ENCODE measurements at regions of chr19 and their contacts with region 1.

Region 1: DNA sequence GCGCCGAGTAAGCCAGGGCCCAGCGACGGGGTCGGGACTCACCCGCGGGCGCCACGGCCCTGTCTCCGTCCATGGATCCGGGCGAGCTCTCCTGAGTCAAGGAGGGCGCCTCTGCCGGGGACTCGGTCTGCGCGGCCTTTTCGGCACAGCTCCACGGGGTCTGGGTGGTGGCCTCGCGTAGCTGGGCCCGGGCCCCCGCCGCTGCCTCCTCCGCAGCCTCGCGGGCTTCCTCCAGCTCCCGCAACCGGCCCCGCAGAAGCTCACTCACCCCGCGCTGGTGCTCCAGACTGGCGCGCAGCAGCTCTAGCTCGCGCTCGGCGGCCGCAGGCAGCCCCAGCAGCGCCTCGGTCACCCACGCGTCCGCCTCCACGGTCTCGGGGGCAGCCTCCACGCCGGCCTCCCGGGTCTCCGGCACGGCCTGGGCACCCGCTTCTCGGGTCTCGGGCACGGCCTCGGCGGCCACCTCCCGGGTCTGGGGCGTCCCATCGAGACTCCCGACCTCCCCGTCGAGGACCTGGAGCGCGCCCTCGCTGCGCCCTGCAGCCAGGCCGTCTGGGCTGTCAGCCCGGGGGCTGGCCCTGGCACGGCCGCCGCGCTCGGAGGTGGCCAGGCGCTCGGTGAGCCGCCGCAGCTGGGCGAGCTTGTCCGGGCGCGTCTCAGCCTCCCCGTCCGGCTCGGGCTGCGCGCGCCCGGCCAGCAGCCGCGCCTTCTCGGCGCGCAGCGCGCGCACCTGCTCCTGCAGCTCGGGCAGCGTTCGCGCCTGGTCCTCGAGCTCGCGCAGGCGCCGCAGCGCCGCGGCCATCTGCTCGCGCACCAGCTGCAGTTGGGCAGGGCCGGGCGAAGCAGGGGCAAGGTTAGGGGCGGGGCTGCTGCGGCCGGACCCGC is 8.4 kb downstream of the KANK3 start:
- DNase-seq: peak; percentile 86
- H3K4me3 ChIP-seq: peak overlapping the region; percentile 37 to 39; a peak in 3 of 4 replicates
- H3K27ac ChIP-seq: no peak overlapping the region
- H3K4me1 ChIP-seq: no peaks in the 10 kb centered on the region; a peak in 1 of 4 replicates
- H3K27me3 ChIP-seq: peaks cover 47% of the 10 kb centered on the region
- CTCF ChIP-seq: no peak
- EP300 ChIP-seq: no peak
- RAD21 ChIP-seq: no peak

Region 2: DNA sequence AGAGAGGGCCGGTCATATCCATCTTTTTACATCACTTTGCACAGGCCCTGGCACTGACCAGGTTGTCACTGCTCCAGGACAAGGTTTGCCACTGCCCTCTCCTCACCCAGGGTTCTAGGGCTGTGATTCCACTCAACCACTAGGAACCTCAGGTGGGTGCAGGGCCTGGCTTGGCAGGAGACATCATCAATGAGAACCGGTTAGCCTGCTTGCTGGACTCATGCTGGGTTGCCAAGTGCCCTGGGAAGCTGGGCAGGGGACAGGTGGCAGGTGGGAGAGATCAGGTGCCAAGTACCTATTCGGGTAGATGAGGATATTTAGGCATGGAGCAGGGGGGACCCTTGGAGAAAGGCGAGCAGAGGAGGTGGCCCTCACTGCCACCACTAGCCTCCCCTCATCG is 129.7 kb before region 1 on chr19:
- CTCF ChIA-PET with region 1: no interaction called
- POLR2A ChIA-PET with region 1: no interaction called
- DNase-seq: no peak
- H3K4me3 ChIP-seq: no peak overlapping the region
- H3K27ac ChIP-seq: no peak overlapping the region
- H3K4me1 ChIP-seq: peaks cover 0 to 6% of the 10 kb centered on the region in 2 experiments; a peak in 2 of 4 replicates
- H3K27me3 ChIP-seq: peaks cover 9% of the 10 kb centered on the region
- CTCF ChIP-seq: no peak
- EP300 ChIP-seq: no peak
- RAD21 ChIP-seq: no peak

Region 3: GRCh38 chr19:8321060-8321985 is 13.4 kb before region 1 on chr19 and contains the starts of genes NDUFA7 and RPS28:
- CTCF ChIA-PET with region 1: interaction called, 14 read pairs
- POLR2A ChIA-PET with region 1: interaction called, 5 read pairs
- DNase-seq: peak; percentile 97
- H3K4me3 ChIP-seq: peak within 1 kb of the TSS; percentile 87 to 99
- H3K27ac ChIP-seq: peak within 1 kb of the TSS; percentile 65 to 79
- H3K4me1 ChIP-seq: peaks cover 14 to 16% of the 10 kb centered on the region in 2 experiments; a peak in 2 of 4 replicates
- H3K27me3 ChIP-seq: no peaks in the 10 kb centered on the region
- CTCF ChIP-seq: no peak
- EP300 ChIP-seq: no peak
- RAD21 ChIP-seq: 0 out of 2 replicates have a peak, but pooled peaks have one; percentile 26
- polyA plus RNA-seq, gene NDUFA7: 107 and 111 TPM in 2 replicates
- polyA plus RNA-seq, gene RPS28: 410 and 601 TPM in 2 replicates

Region 4: DNA sequence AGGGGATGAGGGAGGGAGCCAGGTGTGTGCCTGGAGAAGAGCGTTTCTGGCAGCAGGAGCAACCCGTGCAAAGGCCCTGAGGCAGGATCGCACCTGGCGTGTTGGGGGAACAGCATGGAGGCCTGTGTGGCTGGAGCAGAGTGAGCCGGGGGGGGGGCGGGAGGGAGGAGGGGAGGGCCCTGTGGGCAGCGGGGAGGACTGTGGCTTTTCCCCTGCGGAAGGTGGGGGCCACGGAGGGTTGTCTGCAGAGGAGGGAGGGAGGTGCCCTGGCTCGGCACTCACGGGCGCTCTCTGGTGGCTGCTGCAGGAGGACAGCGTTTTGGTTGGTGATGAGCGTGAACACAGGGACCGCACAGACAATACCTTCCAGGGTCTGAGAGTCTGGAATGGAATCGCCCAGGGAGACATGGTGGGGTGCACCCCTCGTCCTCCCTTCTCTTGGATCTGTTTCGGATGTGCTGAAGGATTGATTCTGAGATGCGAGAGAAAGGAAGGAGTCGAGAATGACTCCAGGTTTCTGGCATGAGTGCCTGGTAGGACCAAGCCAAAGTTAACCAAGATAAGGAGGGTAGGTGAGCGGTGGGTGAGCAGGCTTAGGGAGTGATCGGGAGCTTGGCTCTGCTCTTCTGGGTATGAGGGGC is 62.0 kb after region 1 on chr19:
- CTCF ChIA-PET with region 1: interaction called, 10 read pairs
- POLR2A ChIA-PET with region 1: no interaction called
- DNase-seq: peak; percentile 86
- H3K4me3 ChIP-seq: no peak overlapping the region
- H3K27ac ChIP-seq: no peak overlapping the region
- H3K4me1 ChIP-seq: peaks cover 2 to 26% of the 10 kb centered on the region in 2 experiments; a peak in 2 of 4 replicates
- H3K27me3 ChIP-seq: no peaks in the 10 kb centered on the region
- CTCF ChIP-seq: peak; percentile 74
- EP300 ChIP-seq: no peak
- RAD21 ChIP-seq: peak; percentile 70

Region 5: DNA sequence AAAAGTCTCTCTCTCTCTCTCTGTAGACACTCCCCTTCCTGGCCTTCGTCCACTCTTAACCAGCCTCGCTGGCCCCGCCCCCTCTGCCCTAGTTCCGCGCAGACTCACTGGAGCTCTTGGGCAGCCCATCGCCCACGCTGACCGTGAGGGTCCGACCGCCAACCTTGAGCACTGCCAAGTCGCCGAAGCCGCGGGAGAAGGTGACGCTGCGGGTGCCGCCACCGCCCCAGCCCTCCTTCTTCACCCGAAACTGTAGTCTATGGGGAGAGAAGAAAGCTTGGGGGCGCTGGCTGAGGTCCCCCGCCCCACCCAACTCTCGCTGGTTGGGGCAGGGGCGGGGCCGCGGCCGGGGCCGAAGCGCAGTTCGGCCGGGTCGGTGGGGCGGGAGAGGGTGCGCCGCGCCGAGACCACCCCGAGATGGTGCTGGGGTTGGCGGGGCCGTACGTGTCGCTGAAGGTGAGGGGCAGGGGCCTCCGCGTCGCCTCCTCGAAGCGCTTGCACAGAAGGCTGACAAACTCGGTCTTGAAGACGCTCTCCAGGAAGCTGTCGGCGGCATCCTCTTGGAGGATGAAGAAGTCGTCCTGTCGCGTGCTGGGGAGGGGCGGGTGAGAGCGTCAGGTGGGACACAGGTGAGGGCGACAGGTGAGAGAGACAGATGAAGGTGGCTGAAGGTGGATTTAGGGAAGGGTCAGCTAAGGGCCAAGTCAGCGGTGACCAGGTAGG is 191.8 kb after region 1 on chr19:
- CTCF ChIA-PET with region 1: no interaction called
- POLR2A ChIA-PET with region 1: no interaction called
- DNase-seq: peak; percentile 95
- H3K4me3 ChIP-seq: peak overlapping the region; percentile 63 to 77
- H3K27ac ChIP-seq: peak overlapping the region; percentile 73 to 97
- H3K4me1 ChIP-seq: peaks cover 0 to 7% of the 10 kb centered on the region in 2 experiments; a peak in 1 of 4 replicates
- H3K27me3 ChIP-seq: no peaks in the 10 kb centered on the region
- CTCF ChIP-seq: no peak
- EP300 ChIP-seq: no peak
- RAD21 ChIP-seq: no peak

Measured in SK-N-SH (cell line).